Activated CD4-positive, alpha-beta memory T cell treated with anti-CD3 and anti-CD28 coated beads, Interleukin-2, amount 10 ng/mL, durations not matched to agents 7 days and 5 days (primary cell): ENCODE measurements at regions of chr21 and their contacts with region 1.

Region 1: DNA sequence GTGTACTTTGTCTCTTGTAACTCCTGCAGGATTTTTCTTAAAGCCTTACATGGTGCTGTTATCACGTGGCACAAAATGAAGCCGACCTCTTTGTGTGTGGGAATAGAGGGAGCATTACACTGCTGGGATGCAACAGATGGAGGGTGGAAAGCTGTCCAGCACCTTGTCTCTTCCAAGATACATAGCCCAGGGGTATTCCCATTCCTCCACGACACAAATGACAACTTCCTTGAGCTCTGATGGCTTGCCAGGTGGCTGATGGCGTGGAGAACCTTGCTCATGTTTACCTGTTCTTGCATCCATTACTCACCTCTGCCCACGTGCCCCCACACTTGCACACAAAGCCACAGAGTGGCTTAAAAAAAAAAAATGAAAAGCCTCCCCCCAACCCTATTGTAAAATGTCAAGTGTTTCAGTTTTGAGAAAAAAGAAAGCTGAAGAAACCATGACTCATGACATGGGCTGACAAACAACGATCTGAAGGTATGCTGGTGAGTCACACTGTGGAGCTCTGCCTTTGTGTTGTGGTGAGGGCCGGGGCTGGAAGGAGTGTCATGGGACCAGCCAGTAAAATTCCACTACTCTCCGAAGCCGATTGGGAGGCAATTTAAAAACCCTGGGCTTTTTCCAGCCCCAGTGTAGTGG is 32.0 kb upstream of the ATP5PO start:
- DNase-seq: peak; percentile 87
- H3K4me3 Mint-ChIP-seq: peak overlapping the region; percentile 68
- H3K27ac Mint-ChIP-seq: peak overlapping the region; percentile 99
- H3K4me1 Mint-ChIP-seq: peaks cover 77% of the 10 kb centered on the region
- H3K27me3 Mint-ChIP-seq: no peaks in the 10 kb centered on the region

Region 2: DNA sequence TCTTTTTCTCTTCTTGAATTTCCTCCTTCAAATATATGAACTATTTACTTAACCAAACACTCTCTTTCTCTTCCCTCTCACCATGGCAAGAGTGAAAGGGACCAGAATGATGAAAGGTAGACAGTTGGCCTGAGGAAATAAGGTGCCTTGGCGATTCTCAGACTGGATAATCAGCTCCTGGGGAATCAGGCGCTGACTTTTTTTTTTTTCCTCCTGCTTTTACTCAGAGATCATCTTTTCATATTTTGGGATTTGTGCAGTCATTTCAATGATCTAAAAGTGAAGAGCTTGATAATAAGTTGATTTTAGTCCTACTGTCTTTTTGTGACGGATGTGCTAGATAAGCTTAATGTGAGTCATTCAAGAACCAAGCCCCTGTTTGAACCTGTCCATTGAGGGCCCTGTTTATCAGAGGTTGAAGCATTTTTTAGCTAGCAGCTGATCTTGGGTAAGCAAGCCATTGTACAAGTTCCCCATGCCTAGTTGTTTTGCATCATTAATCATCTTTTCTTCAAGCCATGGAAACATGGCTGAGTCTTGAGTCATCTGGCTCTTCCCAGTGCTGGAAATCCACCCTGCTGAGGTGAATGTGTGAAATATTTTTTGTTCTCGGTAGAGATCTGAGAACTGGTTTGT is 264.5 kb before region 1 on chr21:
- CTCF ChIA-PET with region 1: no interaction called
- POLR2A ChIA-PET with region 1: no interaction called
- DNase-seq: no peak
- H3K4me3 Mint-ChIP-seq: no peak overlapping the region
- H3K27ac Mint-ChIP-seq: no peak overlapping the region
- H3K4me1 Mint-ChIP-seq: no peaks in the 10 kb centered on the region
- H3K27me3 Mint-ChIP-seq: peaks cover 17% of the 10 kb centered on the region

Region 3: DNA sequence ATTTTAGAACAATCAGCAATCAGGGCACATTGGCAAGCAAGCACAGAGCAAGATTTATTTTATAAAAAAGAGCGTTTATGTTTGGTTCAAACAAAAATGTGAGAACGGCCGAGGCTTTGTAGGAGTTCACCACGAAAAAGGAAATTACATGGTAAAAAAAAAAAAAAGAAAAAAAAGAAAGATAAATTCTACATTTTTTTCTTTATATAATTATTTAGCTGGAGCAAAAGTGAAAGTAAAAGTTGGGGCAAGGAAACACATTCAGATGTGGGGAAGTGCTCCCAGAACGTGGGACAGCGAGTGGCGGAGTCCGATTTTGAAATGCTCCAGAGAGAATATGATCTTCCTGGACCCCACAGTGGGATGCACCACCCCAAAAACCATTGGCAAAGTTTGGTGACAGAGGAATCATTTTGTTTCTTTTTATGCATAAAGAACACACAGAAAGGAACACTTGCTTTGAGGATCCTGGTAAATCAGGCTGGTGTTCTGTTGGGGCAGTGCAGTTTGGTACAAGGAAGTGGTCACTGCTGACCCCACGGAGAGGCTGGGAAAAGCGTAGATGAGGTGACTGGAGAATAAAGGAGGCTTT is 15.7 kb before region 1 on chr21:
- CTCF ChIA-PET with region 1: interaction called, 41 read pairs
- POLR2A ChIA-PET with region 1: interaction called, 405 read pairs
- DNase-seq: no peak
- H3K4me3 Mint-ChIP-seq: peak overlapping the region; percentile 94
- H3K27ac Mint-ChIP-seq: peak overlapping the region; percentile 97
- H3K4me1 Mint-ChIP-seq: peaks cover 48% of the 10 kb centered on the region
- H3K27me3 Mint-ChIP-seq: no peaks in the 10 kb centered on the region

Region 4: GRCh38 chr21:33976082-33977016 is 28.8 kb after region 1 on chr21:
- CTCF ChIA-PET with region 1: interaction called, 27 read pairs
- POLR2A ChIA-PET with region 1: interaction called, 270 read pairs
- DNase-seq: peak; percentile 58
- H3K4me3 Mint-ChIP-seq: peak overlapping the region; percentile 62
- H3K27ac Mint-ChIP-seq: peak overlapping the region; percentile 94
- H3K4me1 Mint-ChIP-seq: peaks cover 81% of the 10 kb centered on the region
- H3K27me3 Mint-ChIP-seq: no peaks in the 10 kb centered on the region

Region 5: DNA sequence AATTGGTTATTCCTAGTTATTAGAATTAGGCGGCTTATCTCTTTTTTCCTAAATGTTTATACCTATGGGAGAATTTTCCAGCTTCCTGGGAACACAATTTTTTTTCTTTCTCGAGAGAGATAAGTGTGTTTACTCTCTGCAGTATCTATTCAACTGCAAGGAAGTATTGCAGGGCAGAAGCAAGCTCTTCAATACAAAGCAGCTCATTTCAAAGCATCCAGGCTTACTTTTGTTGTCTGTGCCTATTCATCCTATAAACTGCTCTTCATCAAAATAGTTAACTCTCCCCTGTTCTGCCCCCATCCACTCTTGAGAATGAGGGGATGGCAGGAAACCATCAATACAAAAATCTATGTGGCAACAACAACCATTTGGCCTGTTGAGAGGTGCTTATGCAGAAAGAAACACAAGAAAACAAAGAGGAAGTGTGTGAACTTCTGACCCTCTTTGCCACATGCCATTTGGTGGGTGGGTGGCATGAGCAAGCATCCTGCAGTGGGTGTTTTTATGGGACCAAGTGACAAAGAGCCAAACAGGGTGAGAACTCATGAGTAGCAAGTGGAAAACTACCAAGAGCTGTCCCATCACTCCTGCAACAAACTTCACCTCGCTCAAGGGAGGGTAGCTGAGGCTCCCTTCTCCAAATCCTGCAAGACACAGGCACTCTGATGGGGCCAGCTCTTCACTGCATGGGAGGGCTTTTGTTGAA is 75.2 kb after region 1 on chr21:
- CTCF ChIA-PET with region 1: interaction called, 10 read pairs
- POLR2A ChIA-PET with region 1: interaction called, 22 read pairs
- DNase-seq: peak; percentile 47
- H3K4me3 Mint-ChIP-seq: no peak overlapping the region
- H3K27ac Mint-ChIP-seq: no peak overlapping the region
- H3K4me1 Mint-ChIP-seq: peaks cover 35% of the 10 kb centered on the region
- H3K27me3 Mint-ChIP-seq: no peaks in the 10 kb centered on the region

Region 6: GRCh38 chr21:34091607-34092006 is 144.0 kb after region 1 on chr21:
- CTCF ChIA-PET with region 1: no interaction called
- POLR2A ChIA-PET with region 1: interaction called, 14 read pairs
- DNase-seq: no peak
- H3K4me3 Mint-ChIP-seq: no peak overlapping the region
- H3K27ac Mint-ChIP-seq: no peak overlapping the region
- H3K4me1 Mint-ChIP-seq: peaks cover 29% of the 10 kb centered on the region
- H3K27me3 Mint-ChIP-seq: no peaks in the 10 kb centered on the region